Heart left ventricle (tissue), 16 donors: ENCODE measurements at regions of chrX and their contacts with region 1.

Region 1: DNA sequence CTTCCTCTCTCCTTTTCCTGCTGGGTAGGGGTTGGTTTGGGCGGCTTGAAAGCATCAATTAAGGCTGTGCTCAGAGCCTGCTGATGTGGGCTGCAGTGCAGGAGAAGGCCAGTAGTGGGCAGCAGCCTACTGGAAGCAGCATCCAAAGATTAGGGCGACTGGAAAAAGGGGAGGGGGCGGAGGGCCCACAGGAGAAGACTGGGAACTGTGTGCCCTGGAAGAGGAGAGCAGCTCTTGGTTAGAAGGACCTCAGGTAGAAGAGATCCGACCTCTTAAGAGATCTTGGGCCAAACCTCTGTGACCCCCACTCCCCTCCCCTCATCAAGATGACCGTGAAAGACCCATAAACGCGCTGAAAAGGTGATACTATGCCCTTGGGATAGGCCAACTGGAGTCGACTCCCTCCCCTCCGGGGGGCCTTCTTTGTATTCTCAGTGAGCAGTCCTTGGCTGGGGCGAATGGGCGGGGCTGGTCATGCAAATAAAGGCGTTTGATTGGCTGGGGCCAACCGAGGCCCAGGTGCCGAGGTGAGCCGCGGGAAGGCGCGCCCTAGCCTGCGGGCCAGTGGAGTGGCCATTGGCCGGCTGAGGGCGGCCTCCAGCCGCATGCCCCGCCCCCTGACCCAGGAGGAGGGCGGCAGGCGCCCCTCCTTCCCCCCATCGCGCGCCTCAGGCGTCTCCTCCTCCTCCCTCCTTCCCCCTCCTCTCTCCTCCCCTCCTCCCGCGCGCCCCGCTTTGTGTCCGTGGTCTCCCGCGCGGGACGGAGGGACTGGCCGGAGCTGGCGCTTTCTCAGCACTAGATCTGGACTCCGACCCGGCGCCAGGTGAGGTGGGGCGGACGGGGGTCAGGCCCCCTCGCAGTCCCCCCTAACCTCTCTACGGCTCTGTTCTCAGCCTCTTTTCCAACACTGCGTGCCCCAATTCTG is 10.1 kb downstream of the DLG3 start:
- DNase-seq: peak; percentile 56 to 83 (median 78)
- ATAC-seq: peak; percentile 87 to 92 (median 88)
- H3K4me3 ChIP-seq: peak overlapping the region in 11 of 12 donors; percentile 39 to 69 (median 57)
- H3K27ac ChIP-seq: peak overlapping the region; percentile 40 to 87 (median 76)
- H3K4me1 ChIP-seq: peaks cover 0 to 15% (median 2%) of the 10 kb centered on the region in 12 donors
- H3K27me3 ChIP-seq: peaks cover 0 to 30% (median 0%) of the 10 kb centered on the region in 9 donors
- CTCF ChIP-seq: peak; percentile 58 to 79 (median 71)
- POLR2A ChIP-seq: no peak

Region 2: GRCh38 chrX:70476934-70477733 is 22.4 kb after region 1 on chrX:
- intact Hi-C with region 1: loop called in 3 of 10 experiments (anchors 2 kb)
- DNase-seq: no peak
- ATAC-seq: peak in 3 of 4 donors; percentile 28 to 38 (median 38)
- H3K4me3 ChIP-seq: no peak overlapping the region
- H3K27ac ChIP-seq: peak overlapping the region in 10 of 12 donors; percentile 1 to 87 (median 48)
- H3K4me1 ChIP-seq: peaks cover 0 to 48% (median 13%) of the 10 kb centered on the region in 12 donors
- H3K27me3 ChIP-seq: peaks cover 0 to 47% (median 0%) of the 10 kb centered on the region in 9 donors
- CTCF ChIP-seq: no peak
- POLR2A ChIP-seq: no peak

Region 3: DNA sequence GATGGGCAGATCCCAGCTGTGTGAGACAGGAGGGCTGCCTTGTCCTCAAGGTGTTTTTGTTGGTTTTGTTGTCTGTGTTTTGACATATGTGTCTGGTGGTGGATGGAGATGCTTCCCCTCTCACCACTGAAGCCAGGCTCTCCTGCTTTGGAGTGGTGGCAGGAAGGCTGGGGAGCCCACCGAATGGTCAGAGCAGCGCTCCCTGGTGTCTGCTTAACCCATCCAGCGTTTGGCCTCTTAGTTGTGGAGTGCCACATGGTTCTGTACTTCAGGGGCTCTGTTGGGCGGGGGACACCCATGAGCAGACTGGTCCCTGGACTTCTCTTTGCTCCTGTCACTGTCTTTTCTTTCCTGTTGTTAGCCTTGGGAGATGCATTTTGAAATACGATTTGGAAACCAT is 41.8 kb after region 1 on chrX:
- intact Hi-C with region 1: loop called in 1 of 10 experiments (anchors 5 kb)
- DNase-seq: no peak
- ATAC-seq: no peak
- H3K4me3 ChIP-seq: no peak overlapping the region
- H3K27ac ChIP-seq: no peak overlapping the region
- H3K4me1 ChIP-seq: no peaks in the 10 kb centered on the region
- H3K27me3 ChIP-seq: peaks cover 0 to 14% (median 0%) of the 10 kb centered on the region in 9 donors
- CTCF ChIP-seq: no peak
- POLR2A ChIP-seq: no peak

Region 4: GRCh38 chrX:70554081-70554480 is 99.4 kb after region 1 on chrX:
- intact Hi-C with region 1: loop called in 9 of 10 experiments (anchors 1 to 10 kb)
- DNase-seq: no peak
- ATAC-seq: no peak
- H3K4me3 ChIP-seq: no peak overlapping the region
- H3K27ac ChIP-seq: no peak overlapping the region
- H3K4me1 ChIP-seq: no peaks in the 10 kb centered on the region
- H3K27me3 ChIP-seq: no peaks in the 10 kb centered on the region
- CTCF ChIP-seq: peak in 9 of 12 donors; percentile 7 to 34 (median 17)
- POLR2A ChIP-seq: no peak

Region 5: GRCh38 chrX:70664726-70665125 is 210.0 kb after region 1 on chrX:
- intact Hi-C with region 1: loop called in 5 of 10 experiments (anchors 2 to 10 kb)
- DNase-seq: no peak
- ATAC-seq: no peak
- H3K4me3 ChIP-seq: no peak overlapping the region
- H3K27ac ChIP-seq: no peak overlapping the region
- H3K4me1 ChIP-seq: no peaks in the 10 kb centered on the region
- H3K27me3 ChIP-seq: peaks cover 0 to 12% (median 0%) of the 10 kb centered on the region in 9 donors
- CTCF ChIP-seq: peak in 7 of 12 donors; percentile 7 to 43 (median 24)
- POLR2A ChIP-seq: no peak

Region 6: DNA sequence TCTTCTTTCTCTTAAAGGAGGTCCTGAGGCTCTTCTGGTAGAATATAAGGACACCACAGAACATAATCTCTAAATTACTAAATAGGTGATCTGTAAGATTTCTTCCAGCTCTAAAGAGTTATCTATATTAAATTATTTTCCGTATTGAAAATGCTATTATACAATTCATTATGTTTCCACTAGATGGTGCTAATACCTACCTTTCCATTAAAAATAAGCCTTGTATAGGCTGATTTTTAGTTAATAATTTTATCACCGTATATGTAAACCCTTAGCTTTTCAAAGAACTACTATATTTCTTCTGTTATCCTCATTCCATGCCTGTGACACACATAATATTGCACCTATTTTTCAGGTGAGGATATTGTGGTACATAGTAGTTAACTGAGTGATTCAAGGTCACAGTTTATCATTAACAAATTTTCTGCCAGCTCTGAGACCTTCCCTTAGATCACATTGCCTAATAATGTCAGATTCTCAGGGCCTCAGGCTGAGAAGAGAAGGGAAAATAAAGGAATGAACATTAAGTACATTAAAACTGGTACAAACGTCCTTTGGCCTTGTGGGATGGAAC is 315.0 kb after region 1 on chrX:
- intact Hi-C with region 1: no loop called
- DNase-seq: no peak
- ATAC-seq: no peak
- H3K4me3 ChIP-seq: no peak overlapping the region
- H3K27ac ChIP-seq: no peak overlapping the region
- H3K4me1 ChIP-seq: no peaks in the 10 kb centered on the region
- H3K27me3 ChIP-seq: peaks cover 0 to 19% (median 0%) of the 10 kb centered on the region in 9 donors
- CTCF ChIP-seq: peak; percentile 15 to 58 (median 40)
- POLR2A ChIP-seq: no peak

Region 7: GRCh38 chrX:71815121-71815905 is 1360.6 kb after region 1 on chrX:
- intact Hi-C with region 1: no loop called
- DNase-seq: no peak
- ATAC-seq: no peak
- H3K4me3 ChIP-seq: no peak overlapping the region
- H3K27ac ChIP-seq: no peak overlapping the region
- H3K4me1 ChIP-seq: no peaks in the 10 kb centered on the region
- H3K27me3 ChIP-seq: peaks cover 0 to 14% (median 0%) of the 10 kb centered on the region in 9 donors
- CTCF ChIP-seq: no peak
- POLR2A ChIP-seq: no peak